ENCODE measurements at regions of chr13 and their contacts with region 1.

Region 1: DNA sequence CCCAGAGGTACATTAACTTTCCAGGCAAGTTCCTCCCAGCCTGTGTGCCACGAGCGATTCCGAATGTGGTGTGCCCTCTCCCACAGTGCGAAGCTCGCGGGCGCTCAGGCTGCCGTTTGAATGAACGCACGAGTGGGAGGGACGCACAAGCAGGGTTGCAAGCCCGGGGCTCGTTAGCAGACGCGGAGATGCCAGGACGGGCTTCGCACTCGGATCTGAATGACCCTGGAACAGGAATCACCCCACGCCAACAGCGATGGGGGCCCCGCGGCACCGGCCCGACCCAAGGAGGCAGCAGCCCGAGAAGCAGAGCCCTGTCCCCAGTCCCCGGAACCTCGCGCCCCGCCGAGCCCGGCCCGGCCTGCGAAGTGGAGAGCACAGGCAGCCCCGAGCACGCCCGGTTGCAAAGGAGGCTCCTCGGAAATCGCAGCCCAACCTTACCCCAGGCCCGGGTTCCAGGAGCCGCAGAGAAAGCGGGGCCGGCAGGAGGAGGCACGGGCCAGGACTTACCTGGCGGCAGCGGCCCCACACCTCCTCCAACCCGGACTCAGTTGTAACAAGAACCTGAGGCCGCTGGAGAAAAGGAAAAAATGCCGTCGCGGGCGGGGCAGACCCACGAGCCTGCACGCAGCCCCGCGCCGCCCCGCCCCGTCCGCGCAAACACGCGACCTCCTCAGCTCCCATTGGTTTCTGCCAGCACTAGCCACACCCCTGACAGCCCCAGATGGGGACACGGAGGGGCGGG is at the start of gene SLC25A30:
- DNase-seq: peak; percentile 86 to 93 (median 88)
- H3K4me3 ChIP-seq: peak within 1 kb of the TSS; percentile 84 to 94
- H3K4me3 Mint-ChIP-seq: peak within 1 kb of the TSS; percentile 94 to 97 (median 96)
- H3K27ac ChIP-seq: peak within 1 kb of the TSS; percentile 79
- H3K27ac Mint-ChIP-seq: peak within 1 kb of the TSS; percentile 94 to 99 (median 96)
- H3K4me1 ChIP-seq: peaks cover 37% of the 10 kb centered on the region
- H3K4me1 Mint-ChIP-seq: peaks cover 15 to 38% (median 25%) of the 10 kb centered on the region in 4 donors
- H3K27me3 ChIP-seq: no peaks in the 10 kb centered on the region
- H3K27me3 Mint-ChIP-seq: peaks cover 0 to 2% of the 10 kb centered on the region in 2 donors
- total RNA-seq, gene SLC25A30: 21.4 to 22.0 TPM

Region 2: DNA sequence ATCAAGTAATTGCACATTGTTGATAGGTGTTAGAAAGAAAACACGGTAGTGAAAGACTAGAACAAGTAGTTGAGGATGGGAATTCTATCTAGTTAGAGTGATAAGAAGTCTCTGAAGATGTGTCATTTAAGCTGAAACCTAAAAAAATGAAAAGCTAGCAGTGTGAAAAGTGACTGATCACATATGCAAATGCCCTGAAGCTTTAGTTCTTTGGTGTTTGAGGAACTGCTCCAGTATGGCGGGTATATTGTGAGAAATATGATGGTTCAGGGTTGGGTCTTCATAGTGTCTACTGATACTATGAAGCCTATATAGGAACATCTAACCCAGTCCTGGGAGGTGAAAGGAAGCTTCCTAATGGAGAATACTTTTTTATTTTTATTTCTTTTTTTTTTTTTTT is 383.6 kb before region 1 on chr13:
- CTCF ChIA-PET with region 1: no interaction called
- POLR2A ChIA-PET with region 1: no interaction called
- intact Hi-C with region 1: no loop called
- DNase-seq: no peak
- H3K4me3 ChIP-seq: no peak overlapping the region
- H3K4me3 Mint-ChIP-seq: no peak overlapping the region
- H3K27ac ChIP-seq: no peak overlapping the region
- H3K27ac Mint-ChIP-seq: peak overlapping the region in 1 of 7 donors; percentile 3
- H3K4me1 ChIP-seq: no peaks in the 10 kb centered on the region
- H3K4me1 Mint-ChIP-seq: no peaks in the 10 kb centered on the region
- H3K27me3 ChIP-seq: no peaks in the 10 kb centered on the region
- H3K27me3 Mint-ChIP-seq: no peaks in the 10 kb centered on the region

Region 3: DNA sequence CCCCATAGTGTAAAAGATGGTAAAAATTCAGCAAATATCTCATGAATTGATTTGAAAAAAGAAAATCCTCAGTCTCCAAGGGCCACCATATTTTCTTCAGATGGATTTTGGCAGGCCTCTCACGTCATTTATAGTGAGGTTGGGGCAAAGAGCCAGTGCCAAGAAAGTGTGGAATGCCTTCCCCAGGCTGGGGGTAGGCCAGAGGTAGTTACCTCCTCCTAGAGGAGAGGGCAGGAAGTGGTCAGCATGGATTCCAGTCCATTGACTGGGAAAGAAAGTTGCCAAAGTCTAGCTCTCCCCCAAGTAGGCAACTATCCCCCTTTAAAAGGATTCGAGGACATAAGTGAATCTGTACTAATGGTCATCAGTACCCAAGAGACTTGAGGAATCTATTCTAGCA is 148.8 kb before region 1 on chr13:
- CTCF ChIA-PET with region 1: no interaction called
- POLR2A ChIA-PET with region 1: no interaction called
- intact Hi-C with region 1: no loop called
- DNase-seq: no peak
- H3K4me3 ChIP-seq: no peak overlapping the region
- H3K4me3 Mint-ChIP-seq: no peak overlapping the region
- H3K27ac ChIP-seq: no peak overlapping the region
- H3K27ac Mint-ChIP-seq: no peak overlapping the region
- H3K4me1 ChIP-seq: no peaks in the 10 kb centered on the region
- H3K4me1 Mint-ChIP-seq: no peaks in the 10 kb centered on the region
- H3K27me3 ChIP-seq: no peaks in the 10 kb centered on the region
- H3K27me3 Mint-ChIP-seq: no peaks in the 10 kb centered on the region

Region 4: GRCh38 chr13:45393941-45394570 is 23.9 kb before region 1 on chr13:
- CTCF ChIA-PET with region 1: interaction called, 41 read pairs
- POLR2A ChIA-PET with region 1: interaction called, 47 read pairs
- intact Hi-C with region 1: loop called (anchors 2 kb)
- DNase-seq: peak in 3 of 5 donors; percentile 22 to 31 (median 26)
- H3K4me3 ChIP-seq: no peak overlapping the region
- H3K4me3 Mint-ChIP-seq: no peak overlapping the region
- H3K27ac ChIP-seq: no peak overlapping the region
- H3K27ac Mint-ChIP-seq: peak overlapping the region; percentile 53 to 94 (median 77)
- H3K4me1 ChIP-seq: peaks cover 50% of the 10 kb centered on the region
- H3K4me1 Mint-ChIP-seq: peaks cover 35 to 49% (median 45%) of the 10 kb centered on the region in 4 donors
- H3K27me3 ChIP-seq: no peaks in the 10 kb centered on the region
- H3K27me3 Mint-ChIP-seq: no peaks in the 10 kb centered on the region

Region 5: GRCh38 chr13:45406421-45406820 is 11.5 kb before region 1 on chr13:
- CTCF ChIA-PET with region 1: interaction called, 8 read pairs
- POLR2A ChIA-PET with region 1: interaction called, 10 read pairs
- intact Hi-C with region 1: no loop called
- DNase-seq: no peak
- H3K4me3 ChIP-seq: no peak overlapping the region
- H3K4me3 Mint-ChIP-seq: no peak overlapping the region
- H3K27ac ChIP-seq: no peak overlapping the region
- H3K27ac Mint-ChIP-seq: peak overlapping the region in 5 of 7 donors; percentile 7 to 93 (median 80)
- H3K4me1 ChIP-seq: no peaks in the 10 kb centered on the region
- H3K4me1 Mint-ChIP-seq: peaks cover 6 to 30% (median 14%) of the 10 kb centered on the region in 4 donors
- H3K27me3 ChIP-seq: no peaks in the 10 kb centered on the region
- H3K27me3 Mint-ChIP-seq: no peaks in the 10 kb centered on the region

Region 6: GRCh38 chr13:45434556-45435371 is 16.8 kb after region 1 on chr13:
- CTCF ChIA-PET with region 1: no interaction called
- POLR2A ChIA-PET with region 1: no interaction called
- intact Hi-C with region 1: no loop called
- DNase-seq: no peak
- H3K4me3 ChIP-seq: no peak overlapping the region
- H3K4me3 Mint-ChIP-seq: no peak overlapping the region
- H3K27ac ChIP-seq: no peak overlapping the region
- H3K27ac Mint-ChIP-seq: no peak overlapping the region
- H3K4me1 ChIP-seq: no peaks in the 10 kb centered on the region
- H3K4me1 Mint-ChIP-seq: no peaks in the 10 kb centered on the region
- H3K27me3 ChIP-seq: no peaks in the 10 kb centered on the region
- H3K27me3 Mint-ChIP-seq: no peaks in the 10 kb centered on the region